Sciatic nerve (tissue), 2 donors: ENCODE measurements at regions of chr11 and their contacts with region 1.

Region 1: DNA sequence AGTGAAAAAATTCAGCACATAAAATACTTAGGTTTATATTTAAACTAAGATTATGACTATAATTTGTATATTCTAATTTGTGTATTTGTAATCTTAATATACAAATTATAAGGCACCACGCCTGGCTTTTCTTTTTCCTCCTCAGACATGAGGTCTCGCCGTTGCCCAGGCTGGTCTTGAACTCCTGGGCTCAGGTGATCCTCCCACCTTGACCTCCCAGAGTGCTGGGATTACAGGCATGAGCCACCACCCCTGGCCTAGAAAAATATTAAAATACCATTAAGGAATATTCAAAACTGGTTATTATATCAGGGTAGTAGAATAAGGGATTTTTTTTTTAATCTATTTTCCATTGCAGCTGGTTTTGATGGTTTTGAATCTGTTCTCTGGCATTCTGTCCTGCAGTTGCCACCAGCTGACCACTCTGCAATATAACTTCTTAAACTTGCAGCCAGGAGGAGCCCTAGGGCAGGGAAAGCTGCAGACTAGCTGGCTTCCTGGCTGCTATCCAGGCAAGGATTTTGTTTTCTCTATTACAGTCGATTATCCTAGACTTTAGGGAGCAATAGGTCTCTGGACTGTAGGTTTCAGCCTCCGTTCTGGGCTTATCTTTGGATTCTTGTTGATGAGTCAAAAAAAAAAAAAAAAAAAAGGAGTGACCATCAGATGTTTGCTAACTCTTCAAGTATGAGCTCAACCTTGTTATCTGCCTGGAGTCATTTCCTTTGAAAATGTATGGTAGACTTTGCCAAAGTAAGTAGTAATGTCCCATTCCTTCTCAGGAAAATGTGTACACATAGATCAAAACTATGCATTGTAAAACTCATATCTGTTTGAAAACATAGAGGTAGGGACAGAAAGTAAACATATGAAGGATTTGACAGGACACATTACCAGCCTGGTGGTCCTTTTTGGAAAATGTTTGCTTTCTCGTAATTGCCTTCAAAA is 13.2 kb downstream of the POLA2 start:
- DNase-seq: peak; percentile 87
- ATAC-seq: peak; percentile 93

Region 2: GRCh38 chr11:65159012-65159411 is 116.0 kb before region 1 on chr11:
- intact Hi-C with region 1: no loop called
- DNase-seq: peak; percentile 9
- ATAC-seq: no peak

Region 3: DNA sequence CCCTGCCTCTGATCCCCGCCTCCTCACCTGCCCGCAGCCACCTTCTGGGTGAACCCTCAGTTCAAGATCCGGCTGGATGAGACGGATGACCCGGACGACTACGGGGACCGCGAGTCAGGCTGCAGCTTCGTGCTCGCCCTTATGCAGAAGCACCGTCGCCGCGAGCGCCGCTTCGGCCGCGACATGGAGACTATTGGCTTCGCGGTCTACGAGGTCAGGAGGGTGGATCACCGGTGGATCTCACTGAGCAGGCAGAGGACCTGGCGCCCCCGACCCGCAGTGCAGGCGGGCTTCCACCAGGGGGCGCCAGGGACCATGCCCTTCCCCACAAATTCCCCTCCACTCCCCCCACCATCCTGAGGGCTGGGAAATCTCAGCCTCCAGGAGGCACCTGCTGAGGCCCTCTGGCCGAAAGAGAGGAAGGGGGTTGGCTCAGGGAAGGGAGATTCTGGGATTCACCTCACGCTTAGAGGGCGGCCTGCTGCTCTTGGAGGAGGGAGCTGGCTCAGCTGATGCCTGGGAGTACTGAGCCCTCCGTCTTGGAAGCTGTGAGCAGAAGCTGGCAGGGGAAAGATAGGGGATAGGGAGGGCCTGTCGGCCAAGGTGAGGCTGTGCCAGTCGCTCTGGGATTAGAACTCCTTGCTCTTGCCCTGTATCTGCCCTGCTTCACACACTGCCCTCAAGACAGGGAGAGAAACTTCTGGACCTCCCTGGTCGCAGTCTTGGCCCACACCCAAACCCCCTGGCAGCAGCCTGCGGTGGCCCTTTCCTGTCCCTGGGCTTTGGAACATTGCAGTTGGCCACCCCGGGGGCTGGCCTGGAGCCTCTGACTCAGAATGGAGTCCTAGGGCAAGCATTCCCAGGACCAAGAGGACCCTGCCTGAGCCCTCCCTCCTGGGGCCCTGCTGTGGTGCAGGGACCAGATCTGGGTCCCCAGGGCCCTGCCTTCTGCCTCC is 70.1 kb before region 1 on chr11:
- intact Hi-C with region 1: no loop called
- DNase-seq: peak; percentile 58
- ATAC-seq: peak; percentile 21

Region 4: GRCh38 chr11:65314501-65315203 is 39.6 kb after region 1 on chr11 and contains the start of gene CDC42EP2:
- intact Hi-C with region 1: loop called (anchors 5 kb)
- DNase-seq: peak; percentile 93
- ATAC-seq: peak; percentile 88
- total RNA-seq, gene CDC42EP2: 34.7 TPM